ENCODE measurements at regions of chr6 and their contacts with region 1.

Region 1: DNA sequence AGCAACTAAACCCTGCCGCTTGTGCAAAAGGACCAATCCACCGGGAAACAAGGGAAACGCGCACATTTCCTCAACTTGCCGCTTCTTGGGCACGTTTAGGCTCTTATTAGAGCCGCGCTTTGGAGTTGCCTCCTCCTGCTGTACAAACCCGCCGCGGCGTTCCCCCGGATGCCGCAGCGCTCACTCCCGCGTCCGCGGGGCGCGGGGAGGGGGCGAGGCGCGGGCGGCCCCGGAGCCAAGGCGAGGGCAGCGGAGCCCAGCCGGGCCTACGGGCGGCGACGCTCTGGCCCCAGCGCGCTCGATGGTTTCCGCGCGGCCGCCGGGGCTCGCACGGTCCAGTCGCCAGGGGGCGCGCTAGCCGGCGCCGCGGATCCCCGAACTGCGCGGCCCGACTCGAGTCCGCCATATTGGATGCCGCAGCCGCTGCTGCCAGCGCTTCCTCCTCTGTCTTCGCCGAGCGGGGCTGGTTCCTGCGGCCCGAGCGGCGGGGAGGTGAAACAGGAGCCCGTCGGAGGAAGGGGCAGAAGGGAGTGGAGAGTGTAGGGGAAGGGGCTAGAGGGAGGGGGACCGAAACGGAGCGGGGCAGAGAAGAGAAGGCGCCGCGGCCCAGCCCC is at the start of gene SCAF8:
- DNase-seq: peak; percentile 98
- H3K4me3 ChIP-seq: peak within 1 kb of the TSS; percentile 64 to 97 (median 90)
- H3K27ac ChIP-seq: peak within 1 kb of the TSS; percentile 99 to 100 (median 100)
- H3K4me1 ChIP-seq: peaks cover 28 to 54% (median 51%) of the 10 kb centered on the region in 6 donors
- H3K27me3 ChIP-seq: no peaks in the 10 kb centered on the region
- CTCF ChIP-seq: peak; percentile 56 to 98 (median 91)
- POLR2A ChIP-seq: peak in 1 of 3 donors; percentile 58
- total RNA-seq, gene SCAF8: 46.9 to 60.7 (median 55.3) TPM

Region 2: GRCh38 chr6:154683756-154684523 is 49.2 kb before region 1 on chr6:
- intact Hi-C with region 1: loop called (anchors 5 kb)
- DNase-seq: no peak
- H3K4me3 ChIP-seq: no peak overlapping the region
- H3K27ac ChIP-seq: peak overlapping the region; percentile 23 to 78 (median 70)
- H3K4me1 ChIP-seq: peaks cover 0 to 18% (median 14%) of the 10 kb centered on the region in 6 donors
- H3K27me3 ChIP-seq: no peaks in the 10 kb centered on the region
- CTCF ChIP-seq: no peak
- POLR2A ChIP-seq: no peak